HepG2 (cell line): ENCODE measurements at regions of chr1 and their contacts with region 1.

Region 1: GRCh38 chr1:198056255-198056654 is 100.5 kb upstream of the NEK7 start:
- DNase-seq: peak; percentile 5
- ATAC-seq: peak; percentile 100
- H3K4me3 ChIP-seq: no peak overlapping the region
- H3K27ac ChIP-seq: no peak overlapping the region
- H3K4me1 ChIP-seq: no peaks in the 10 kb centered on the region
- H3K27me3 ChIP-seq: no peaks in the 10 kb centered on the region
- CTCF ChIP-seq: peak; percentile 68
- EP300 ChIP-seq: no peak
- POLR2A ChIP-seq: no peak
- RAD21 ChIP-seq: no peak

Region 2: GRCh38 chr1:197521118-197521739 is 535.0 kb before region 1 on chr1:
- CTCF ChIA-PET with region 1: no interaction called
- POLR2A ChIA-PET with region 1: no interaction called
- in situ Hi-C with region 1: no loop called
- intact Hi-C with region 1: loop called (anchors 5 kb)
- DNase-seq: peak; percentile 23
- ATAC-seq: 0 out of 3 replicates have a peak, but pooled peaks have one; percentile 28
- H3K4me3 ChIP-seq: no peak overlapping the region
- H3K27ac ChIP-seq: no peak overlapping the region
- H3K4me1 ChIP-seq: no peaks in the 10 kb centered on the region
- H3K27me3 ChIP-seq: no peaks in the 10 kb centered on the region
- CTCF ChIP-seq: peak; percentile 59
- EP300 ChIP-seq: no peak
- POLR2A ChIP-seq: no peak
- RAD21 ChIP-seq: peak; percentile 39; the same call in 1 of the 2 replicates